ENCODE measurements at regions of chr12 and their contacts with region 1.

Region 1: DNA sequence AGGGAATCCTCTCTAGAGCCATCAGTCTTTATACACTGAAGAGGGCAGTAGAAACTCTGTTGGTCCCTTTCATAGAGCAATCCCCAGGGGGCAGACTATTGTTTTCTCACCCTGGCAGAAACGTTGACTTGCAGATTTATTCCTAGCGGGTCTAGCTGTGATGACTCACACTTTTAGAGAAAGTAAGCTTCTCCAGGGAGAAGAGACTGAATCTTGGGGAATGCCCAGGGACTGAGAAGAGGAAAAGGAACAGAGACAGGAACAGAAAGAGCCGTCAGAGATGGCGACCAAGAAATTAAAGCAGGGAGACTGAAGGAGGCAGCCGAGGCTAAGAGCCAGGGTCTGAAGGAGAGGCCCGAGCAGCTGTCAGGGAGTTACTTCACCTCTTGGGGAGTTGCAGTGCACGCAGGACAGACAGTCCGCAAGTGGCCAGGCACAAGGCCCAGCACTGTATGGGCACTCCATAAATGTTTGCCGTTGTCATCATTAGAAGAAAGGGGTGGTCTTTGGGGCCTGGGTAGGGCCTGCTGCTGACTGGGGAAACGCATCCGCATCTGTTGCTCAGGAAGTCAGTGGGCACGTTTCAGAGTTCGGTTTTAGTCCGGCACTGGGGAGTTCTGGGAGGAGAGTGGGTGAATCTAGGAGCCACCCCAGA is 13.0 kb downstream of the PLEKHG6 start:
- DNase-seq: peak in 6 of 7 donors; percentile 66 to 86 (median 73)
- H3K4me3 ChIP-seq: no peak overlapping the region
- H3K27ac ChIP-seq: peak overlapping the region in 4 of 5 donors; percentile 53 to 90 (median 80)
- H3K4me1 ChIP-seq: peaks cover 35 to 65% of the 10 kb centered on the region in 2 donors
- H3K27me3 ChIP-seq: no peaks in the 10 kb centered on the region
- CTCF ChIP-seq: peak; percentile 30 to 72 (median 56)
- POLR2A ChIP-seq: no peak

Region 2: GRCh38 chr12:6039894-6040568 is 283.4 kb before region 1 on chr12:
- intact Hi-C with region 1: no loop called
- DNase-seq: peak; percentile 46 to 80 (median 70)
- H3K4me3 ChIP-seq: no peak overlapping the region
- H3K27ac ChIP-seq: no peak overlapping the region
- H3K4me1 ChIP-seq: no peaks in the 10 kb centered on the region
- H3K27me3 ChIP-seq: no peaks in the 10 kb centered on the region
- CTCF ChIP-seq: peak; percentile 91 to 96 (median 94)
- POLR2A ChIP-seq: no peak

Region 3: GRCh38 chr12:6383572-6384498 is 60.4 kb after region 1 on chr12 and contains the start of gene LTBR:
- intact Hi-C with region 1: loop called in 1 of 2 experiments (anchors 5 kb)
- DNase-seq: peak; percentile 95 to 98 (median 98)
- H3K4me3 ChIP-seq: peak within 1 kb of the TSS; percentile 31 to 88 (median 62)
- H3K27ac ChIP-seq: peak within 1 kb of the TSS; percentile 83 to 97 (median 95)
- H3K4me1 ChIP-seq: peaks cover 19 to 41% of the 10 kb centered on the region in 2 donors
- H3K27me3 ChIP-seq: no peaks in the 10 kb centered on the region
- CTCF ChIP-seq: peak in 1 of 6 experiments; percentile 17
- POLR2A ChIP-seq: peak; percentile 68 to 77
- total RNA-seq, gene LTBR: 34.6 to 295 (median 158) TPM

Region 4: GRCh38 chr12:6465467-6466183 is 142.2 kb after region 1 on chr12:
- intact Hi-C with region 1: loop called in 1 of 2 experiments (anchors 10 kb)
- DNase-seq: peak; percentile 44 to 78 (median 59)
- H3K4me3 ChIP-seq: no peak overlapping the region
- H3K27ac ChIP-seq: no peak overlapping the region
- H3K4me1 ChIP-seq: peaks cover 15 to 22% of the 10 kb centered on the region in 2 donors
- H3K27me3 ChIP-seq: no peaks in the 10 kb centered on the region
- CTCF ChIP-seq: peak; percentile 80 to 98 (median 90)
- POLR2A ChIP-seq: no peak

Region 5: DNA sequence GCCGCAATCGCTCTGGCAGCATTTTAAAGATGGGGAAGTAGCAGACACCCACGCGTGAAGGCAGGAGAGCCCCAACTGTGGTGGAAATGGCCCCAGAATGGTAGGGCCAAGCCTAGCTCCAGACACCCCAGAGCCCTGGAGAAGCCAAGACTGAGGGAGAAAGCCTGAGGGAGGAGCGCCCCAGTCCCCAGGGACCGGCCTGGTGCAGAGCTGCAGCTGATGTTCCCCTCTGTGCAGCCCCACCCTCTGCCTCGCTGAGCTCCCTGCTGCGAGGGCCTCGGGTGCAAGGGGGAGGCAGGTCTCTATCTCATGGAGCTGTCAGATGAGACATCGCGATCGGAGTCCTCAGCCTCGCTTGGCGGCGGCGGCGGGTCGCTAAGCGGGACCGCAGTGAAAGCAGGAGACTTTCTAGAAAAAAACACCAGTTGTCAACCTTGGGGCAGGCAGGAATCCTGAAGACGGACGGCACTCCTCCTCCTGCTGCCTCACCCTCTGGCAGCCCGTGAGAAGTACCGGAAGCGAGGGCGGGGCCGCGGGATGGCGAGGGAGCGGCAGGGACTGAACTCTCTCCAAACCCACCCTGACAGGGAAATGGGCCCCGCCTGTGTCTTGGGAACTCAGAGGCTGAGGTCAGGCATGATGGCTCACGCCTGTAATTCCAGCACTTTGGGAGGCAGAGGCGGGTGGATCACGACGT is 216.9 kb after region 1 on chr12:
- intact Hi-C with region 1: loop called in 1 of 2 experiments (anchors 10 kb)
- DNase-seq: peak; percentile 81 to 93 (median 90)
- H3K4me3 ChIP-seq: peak overlapping the region in 1 of 4 donors; percentile 4
- H3K27ac ChIP-seq: peak overlapping the region; percentile 25 to 86 (median 66)
- H3K4me1 ChIP-seq: peaks cover 33 to 53% of the 10 kb centered on the region in 2 donors
- H3K27me3 ChIP-seq: no peaks in the 10 kb centered on the region
- CTCF ChIP-seq: no peak
- POLR2A ChIP-seq: peak in 1 of 2 donors; percentile 16